ENCODE measurements at regions of chr7 and their contacts with region 1.

Region 1: GRCh38 chr7:111329367-111330234 is 232.7 kb downstream of the IMMP2L start:
- H3K4me3 Mint-ChIP-seq: no peak overlapping the region
- H3K27ac Mint-ChIP-seq: peak overlapping the region; percentile 3
- H3K4me1 Mint-ChIP-seq: peaks cover 13% of the 10 kb centered on the region
- H3K27me3 Mint-ChIP-seq: no peaks in the 10 kb centered on the region

Region 2: GRCh38 chr7:111298091-111298490 is 31.5 kb before region 1 on chr7:
- intact Hi-C with region 1: no loop called
- H3K4me3 Mint-ChIP-seq: no peak overlapping the region
- H3K27ac Mint-ChIP-seq: no peak overlapping the region
- H3K4me1 Mint-ChIP-seq: no peaks in the 10 kb centered on the region
- H3K27me3 Mint-ChIP-seq: no peaks in the 10 kb centered on the region

Region 3: GRCh38 chr7:111735661-111736551 is 406.3 kb after region 1 on chr7:
- intact Hi-C with region 1: loop called (anchors 10 kb)
- H3K4me3 Mint-ChIP-seq: no peak overlapping the region
- H3K27ac Mint-ChIP-seq: no peak overlapping the region
- H3K4me1 Mint-ChIP-seq: no peaks in the 10 kb centered on the region
- H3K27me3 Mint-ChIP-seq: no peaks in the 10 kb centered on the region

Region 4: GRCh38 chr7:113289140-113289740 is 1959.6 kb after region 1 on chr7:
- intact Hi-C with region 1: no loop called
- H3K4me3 Mint-ChIP-seq: no peak overlapping the region
- H3K27ac Mint-ChIP-seq: no peak overlapping the region
- H3K4me1 Mint-ChIP-seq: no peaks in the 10 kb centered on the region
- H3K27me3 Mint-ChIP-seq: no peaks in the 10 kb centered on the region